ENCODE measurements at regions of chr2 and their contacts with region 1.

Region 1: GRCh38 chr2:219543601-219544358 is at the starts of genes CHPF and TMEM198:
- DNase-seq: peak; percentile 98
- H3K4me3 Mint-ChIP-seq: peak within 1 kb of the TSS; percentile 91
- H3K27ac Mint-ChIP-seq: peak within 1 kb of the TSS; percentile 97
- H3K4me1 Mint-ChIP-seq: peaks cover 20% of the 10 kb centered on the region
- H3K27me3 Mint-ChIP-seq: peaks cover 30% of the 10 kb centered on the region
- CTCF ChIP-seq: no peak
- total RNA-seq, gene CHPF: 139 and 141 TPM in 2 replicates
- total RNA-seq, gene TMEM198: 5.2 and 5.9 TPM in 2 replicates

Region 2: GRCh38 chr2:219469186-219469724 is 74.5 kb before region 1 on chr2:
- CTCF ChIA-PET with region 1: no interaction called
- intact Hi-C with region 1: no loop called
- DNase-seq: no peak
- H3K4me3 Mint-ChIP-seq: no peak overlapping the region
- H3K27ac Mint-ChIP-seq: no peak overlapping the region
- H3K4me1 Mint-ChIP-seq: peaks cover 13% of the 10 kb centered on the region
- H3K27me3 Mint-ChIP-seq: no peaks in the 10 kb centered on the region
- CTCF ChIP-seq: no peak

Region 3: DNA sequence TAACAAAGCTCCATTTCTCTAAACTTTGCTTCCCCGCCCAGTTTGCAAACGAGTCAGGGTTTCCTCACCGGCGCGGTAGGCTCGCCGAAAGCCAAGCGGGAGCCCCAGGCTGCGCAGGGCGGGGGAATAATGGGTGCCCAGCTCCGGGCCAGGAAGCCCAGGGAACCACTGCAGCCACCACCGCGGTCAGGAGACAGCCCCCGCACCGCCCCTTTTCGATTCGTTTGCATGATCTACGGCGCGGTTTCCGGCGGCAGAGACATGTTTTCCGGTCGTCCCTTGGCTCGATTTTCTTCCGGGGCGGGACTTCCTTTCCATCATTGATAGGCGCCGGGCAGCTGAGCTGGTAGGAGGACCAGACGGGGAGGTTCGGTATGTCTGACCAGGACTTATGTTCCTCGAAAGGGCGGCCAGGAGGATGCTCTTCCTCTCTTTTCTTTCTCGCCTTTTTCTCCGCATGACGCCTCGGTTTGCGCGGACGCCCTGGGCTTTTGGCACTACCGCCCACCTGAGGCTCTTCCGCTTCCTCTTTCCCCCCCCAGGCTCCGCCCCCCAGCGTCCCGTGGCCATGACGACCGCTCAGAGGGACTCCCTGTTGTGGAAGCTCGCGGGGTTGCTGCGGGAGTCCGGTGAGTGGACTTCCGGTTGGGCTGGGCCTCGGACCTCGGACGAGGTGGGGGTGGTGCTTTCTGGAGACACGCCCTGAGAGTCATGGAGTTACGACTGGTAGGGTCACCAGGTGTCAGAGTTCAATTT is 54.0 kb after region 1 on chr2 and contains the start of gene STK11IP:
- CTCF ChIA-PET with region 1: interaction called, 4 read pairs
- intact Hi-C with region 1: loop called (anchors 2 kb)
- DNase-seq: peak; percentile 96
- H3K4me3 Mint-ChIP-seq: peak within 1 kb of the TSS; percentile 95
- H3K27ac Mint-ChIP-seq: peak within 1 kb of the TSS; percentile 93
- H3K4me1 Mint-ChIP-seq: peaks cover 10% of the 10 kb centered on the region
- H3K27me3 Mint-ChIP-seq: no peaks in the 10 kb centered on the region
- CTCF ChIP-seq: no peak
- total RNA-seq, gene STK11IP: 29.3 and 32.5 TPM in 2 replicates

Region 4: GRCh38 chr2:219642465-219643080 is 98.8 kb after region 1 on chr2:
- CTCF ChIA-PET with region 1: interaction called, 3 read pairs
- intact Hi-C with region 1: loop called (anchors 5 kb)
- DNase-seq: peak; percentile 97
- H3K4me3 Mint-ChIP-seq: peak overlapping the region; percentile 15
- H3K27ac Mint-ChIP-seq: peak overlapping the region; percentile 63
- H3K4me1 Mint-ChIP-seq: peaks cover 28% of the 10 kb centered on the region
- H3K27me3 Mint-ChIP-seq: no peaks in the 10 kb centered on the region
- CTCF ChIP-seq: peak; percentile 99